ENCODE measurements at regions of chr7 and their contacts with region 1.

Region 1: GRCh38 chr7:48088559-48089045 is 463 bp upstream of the UPP1 start:
- DNase-seq: no peak
- H3K4me3 Mint-ChIP-seq: peak overlapping the region; percentile 84
- H3K27ac Mint-ChIP-seq: peak overlapping the region; percentile 92
- H3K4me1 Mint-ChIP-seq: peaks cover 75% of the 10 kb centered on the region
- H3K27me3 Mint-ChIP-seq: no peaks in the 10 kb centered on the region

Region 2: GRCh38 chr7:47979145-47979831 is 109.3 kb before region 1 on chr7 and contains the start of gene HUS1:
- CTCF ChIA-PET with region 1: no interaction called
- intact Hi-C with region 1: loop called (anchors 1 kb)
- DNase-seq: peak; percentile 94
- H3K4me3 Mint-ChIP-seq: peak within 1 kb of the TSS; percentile 90
- H3K27ac Mint-ChIP-seq: peak within 1 kb of the TSS; percentile 94
- H3K4me1 Mint-ChIP-seq: peaks cover 28% of the 10 kb centered on the region
- H3K27me3 Mint-ChIP-seq: no peaks in the 10 kb centered on the region
- total RNA-seq, gene HUS1: 55.0 to 61.2 TPM

Region 3: GRCh38 chr7:48035301-48035966 is 53.2 kb before region 1 on chr7 and contains the start of gene C7orf57:
- CTCF ChIA-PET with region 1: interaction called, 3 read pairs
- intact Hi-C with region 1: loop called (anchors 1 kb)
- DNase-seq: peak; percentile 86
- H3K4me3 Mint-ChIP-seq: peak within 1 kb of the TSS; percentile 77
- H3K27ac Mint-ChIP-seq: no peak within 1 kb of the TSS
- H3K4me1 Mint-ChIP-seq: peaks cover 7% of the 10 kb centered on the region
- H3K27me3 Mint-ChIP-seq: peaks cover 24% of the 10 kb centered on the region
- total RNA-seq, gene C7orf57: 0.29 to 0.44 TPM

Region 4: GRCh38 chr7:48041653-48041970 is 47.0 kb before region 1 on chr7:
- CTCF ChIA-PET with region 1: interaction called, 3 read pairs
- intact Hi-C with region 1: loop called (anchors 1 kb)
- DNase-seq: no peak
- H3K4me3 Mint-ChIP-seq: no peak overlapping the region
- H3K27ac Mint-ChIP-seq: peak overlapping the region; percentile 62
- H3K4me1 Mint-ChIP-seq: peaks cover 29% of the 10 kb centered on the region
- H3K27me3 Mint-ChIP-seq: peaks cover 11% of the 10 kb centered on the region

Region 5: DNA sequence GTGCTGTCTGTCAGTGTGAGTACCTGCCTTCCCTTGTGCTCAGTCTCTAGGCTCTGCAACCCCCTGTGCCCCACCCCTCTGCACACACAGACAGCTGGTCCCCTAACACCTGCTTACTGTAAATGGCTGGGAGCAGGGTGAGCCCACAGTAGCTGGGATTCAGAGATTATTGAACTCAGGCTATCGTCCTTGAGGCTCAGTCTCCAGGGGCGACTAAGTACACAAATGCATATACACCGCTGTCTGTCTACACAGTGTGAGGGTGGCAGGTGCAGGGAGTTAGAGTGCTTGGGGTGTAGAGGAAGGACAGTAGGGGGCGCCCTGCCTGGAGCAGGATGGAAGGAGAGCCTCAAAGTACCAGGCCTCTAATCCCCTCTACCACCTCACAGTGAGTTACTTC is 13.4 kb after region 1 on chr7:
- CTCF ChIA-PET with region 1: interaction called, 11 read pairs
- intact Hi-C with region 1: loop called (anchors 1 kb)
- DNase-seq: peak; percentile 46
- H3K4me3 Mint-ChIP-seq: no peak overlapping the region
- H3K27ac Mint-ChIP-seq: peak overlapping the region; percentile 21
- H3K4me1 Mint-ChIP-seq: peaks cover 35% of the 10 kb centered on the region
- H3K27me3 Mint-ChIP-seq: no peaks in the 10 kb centered on the region

Region 6: DNA sequence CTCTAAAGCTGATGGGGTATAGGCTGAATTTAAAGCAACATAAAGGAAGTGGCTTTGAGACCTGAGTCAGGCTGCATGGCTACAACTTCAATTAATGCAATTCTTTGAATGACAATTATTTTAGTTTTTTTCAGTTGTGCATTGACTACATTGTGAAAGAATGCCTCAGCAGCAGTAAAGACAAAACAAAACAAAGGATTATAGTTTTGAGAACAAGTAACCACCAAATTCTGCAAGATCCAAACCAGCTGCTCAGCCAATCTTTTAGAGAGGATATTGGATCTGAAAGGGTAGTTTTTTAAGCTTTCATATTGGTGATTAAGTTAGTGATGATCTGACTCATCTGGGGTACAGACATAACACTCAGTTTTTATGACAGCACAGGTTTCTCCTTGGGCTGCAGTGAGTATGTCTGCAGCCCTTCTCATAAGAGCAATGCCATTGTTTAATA is 42.1 kb after region 1 on chr7:
- CTCF ChIA-PET with region 1: no interaction called
- intact Hi-C with region 1: loop called (anchors 2 kb)
- DNase-seq: no peak
- H3K4me3 Mint-ChIP-seq: no peak overlapping the region
- H3K27ac Mint-ChIP-seq: no peak overlapping the region
- H3K4me1 Mint-ChIP-seq: peaks cover 6% of the 10 kb centered on the region
- H3K27me3 Mint-ChIP-seq: peaks cover 11% of the 10 kb centered on the region

Measured in activated naive CD4-positive, alpha-beta T cell treated with anti-CD3 and anti-CD28 coated beads for 36 hours (primary cell).